HCT116 (cell line): ENCODE measurements at regions of chr1 and their contacts with region 1.

Region 1: GRCh38 chr1:84724128-84724860 is 34.0 kb upstream of the SSX2IP start:
- DNase-seq: peak; percentile 51
- ATAC-seq: peak; percentile 99
- H3K4me3 ChIP-seq: no peak overlapping the region
- H3K27ac ChIP-seq: no peak overlapping the region
- H3K4me1 ChIP-seq: peaks cover 0 to 7% of the 10 kb centered on the region in 2 experiments; a peak in 1 of 4 replicates
- H3K27me3 ChIP-seq: no peaks in the 10 kb centered on the region
- CTCF ChIP-seq: peak; percentile 54 to 91 (median 91); a peak in 5 of 6 replicates
- POLR2A ChIP-seq: no peak
- RAD21 ChIP-seq: peak; percentile 62

Region 2: DNA sequence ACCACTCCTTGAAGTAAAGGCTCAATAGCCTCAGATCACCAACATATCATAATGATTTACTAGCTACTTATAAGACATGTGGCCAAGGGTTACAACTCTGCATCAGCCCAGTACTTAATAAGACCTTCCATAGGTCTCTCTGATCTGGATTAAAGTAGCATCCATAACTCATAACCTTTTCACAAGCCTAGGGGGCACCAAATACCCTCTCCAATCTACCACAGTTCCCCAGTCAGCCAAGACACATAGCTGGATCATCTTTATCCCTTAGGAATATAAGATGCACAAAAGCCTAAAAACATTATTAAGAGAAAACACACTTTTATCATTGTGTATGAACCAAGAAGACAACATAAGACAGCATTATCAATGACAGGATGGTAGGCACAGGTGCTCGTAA is 56.1 kb before region 1 on chr1:
- CTCF ChIA-PET with region 1: interaction called, 17 read pairs
- POLR2A ChIA-PET with region 1: no interaction called
- RAD21 ChIA-PET with region 1: interaction called in 1 of 2 experiments, 3 read pairs
- intact Hi-C with region 1: no loop called
- DNase-seq: no peak
- ATAC-seq: peak; percentile 72
- H3K4me3 ChIP-seq: no peak overlapping the region
- H3K27ac ChIP-seq: no peak overlapping the region
- H3K4me1 ChIP-seq: no peaks in the 10 kb centered on the region
- H3K27me3 ChIP-seq: no peaks in the 10 kb centered on the region
- CTCF ChIP-seq: peak; percentile 24 to 41 (median 30); a peak in 3 of 6 replicates
- POLR2A ChIP-seq: no peak
- RAD21 ChIP-seq: peak; percentile 55

Region 3: DNA sequence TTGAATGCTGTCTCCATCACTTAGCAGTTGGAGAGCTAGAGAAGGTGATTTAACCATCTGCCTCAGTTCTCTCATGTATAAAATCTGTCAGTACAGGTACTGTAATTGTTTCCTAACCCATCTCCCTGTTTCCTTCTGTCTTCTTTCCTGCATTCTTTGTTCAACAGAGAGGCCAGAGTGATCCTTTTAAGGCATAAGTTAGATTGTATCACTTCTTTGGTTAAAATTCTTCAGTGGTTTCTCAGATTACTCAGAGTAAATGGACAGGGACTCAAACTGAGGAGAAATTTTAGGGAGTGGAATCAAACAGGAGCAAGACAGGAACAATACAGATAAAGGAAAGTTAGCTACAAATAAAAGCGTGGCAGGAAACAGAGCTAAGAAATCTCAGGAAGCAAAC is 11.2 kb after region 1 on chr1:
- CTCF ChIA-PET with region 1: interaction called, 16 read pairs
- POLR2A ChIA-PET with region 1: no interaction called
- RAD21 ChIA-PET with region 1: no interaction called
- intact Hi-C with region 1: no loop called
- DNase-seq: no peak
- ATAC-seq: no peak
- H3K4me3 ChIP-seq: no peak overlapping the region
- H3K27ac ChIP-seq: no peak overlapping the region
- H3K4me1 ChIP-seq: no peaks in the 10 kb centered on the region
- H3K27me3 ChIP-seq: no peaks in the 10 kb centered on the region
- CTCF ChIP-seq: no peak
- POLR2A ChIP-seq: no peak
- RAD21 ChIP-seq: no peak

Region 4: DNA sequence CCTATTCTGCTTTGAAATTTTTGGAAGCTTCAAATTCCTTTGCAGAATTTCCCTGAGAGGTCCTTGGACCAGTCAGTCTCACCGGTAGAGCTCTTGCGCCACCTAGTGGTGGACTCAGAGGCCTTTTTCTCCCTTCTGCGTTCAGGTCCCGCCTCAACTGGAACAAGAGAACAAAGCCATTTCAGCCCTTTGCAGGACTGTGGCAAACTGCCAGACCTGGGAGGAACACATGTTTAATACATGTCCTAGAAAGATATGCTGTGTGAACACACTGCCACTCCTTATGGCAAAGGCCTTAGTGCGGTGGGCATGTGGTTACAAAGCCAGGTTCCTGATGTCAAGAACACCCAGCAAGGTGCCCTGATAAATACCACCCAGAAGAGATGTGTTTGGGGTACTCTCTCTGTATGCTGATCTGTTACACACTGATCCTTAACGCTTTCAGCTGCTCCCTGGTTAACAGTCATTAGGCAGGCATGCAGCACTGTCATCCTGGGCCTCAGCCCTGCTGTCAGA is 48.2 kb after region 1 on chr1:
- CTCF ChIA-PET with region 1: no interaction called
- POLR2A ChIA-PET with region 1: no interaction called
- RAD21 ChIA-PET with region 1: no interaction called
- intact Hi-C with region 1: no loop called
- DNase-seq: peak; percentile 78
- ATAC-seq: peak; percentile 91
- H3K4me3 ChIP-seq: no peak overlapping the region
- H3K27ac ChIP-seq: no peak overlapping the region
- H3K4me1 ChIP-seq: no peaks in the 10 kb centered on the region
- H3K27me3 ChIP-seq: no peaks in the 10 kb centered on the region
- CTCF ChIP-seq: peak; percentile 70 to 97 (median 94)
- POLR2A ChIP-seq: no peak
- RAD21 ChIP-seq: peak; percentile 91